ENCODE measurements at regions of chr12 and their contacts with region 1.

Region 1: GRCh38 chr12:25436203-25437030 is 116.7 kb downstream of the LMNTD1 start:
- ATAC-seq: peak; percentile 39 to 93 (median 60)
- H3K4me3 ChIP-seq: no peak overlapping the region
- H3K27ac ChIP-seq: no peak overlapping the region
- H3K4me1 ChIP-seq: no peaks in the 10 kb centered on the region

Region 2: DNA sequence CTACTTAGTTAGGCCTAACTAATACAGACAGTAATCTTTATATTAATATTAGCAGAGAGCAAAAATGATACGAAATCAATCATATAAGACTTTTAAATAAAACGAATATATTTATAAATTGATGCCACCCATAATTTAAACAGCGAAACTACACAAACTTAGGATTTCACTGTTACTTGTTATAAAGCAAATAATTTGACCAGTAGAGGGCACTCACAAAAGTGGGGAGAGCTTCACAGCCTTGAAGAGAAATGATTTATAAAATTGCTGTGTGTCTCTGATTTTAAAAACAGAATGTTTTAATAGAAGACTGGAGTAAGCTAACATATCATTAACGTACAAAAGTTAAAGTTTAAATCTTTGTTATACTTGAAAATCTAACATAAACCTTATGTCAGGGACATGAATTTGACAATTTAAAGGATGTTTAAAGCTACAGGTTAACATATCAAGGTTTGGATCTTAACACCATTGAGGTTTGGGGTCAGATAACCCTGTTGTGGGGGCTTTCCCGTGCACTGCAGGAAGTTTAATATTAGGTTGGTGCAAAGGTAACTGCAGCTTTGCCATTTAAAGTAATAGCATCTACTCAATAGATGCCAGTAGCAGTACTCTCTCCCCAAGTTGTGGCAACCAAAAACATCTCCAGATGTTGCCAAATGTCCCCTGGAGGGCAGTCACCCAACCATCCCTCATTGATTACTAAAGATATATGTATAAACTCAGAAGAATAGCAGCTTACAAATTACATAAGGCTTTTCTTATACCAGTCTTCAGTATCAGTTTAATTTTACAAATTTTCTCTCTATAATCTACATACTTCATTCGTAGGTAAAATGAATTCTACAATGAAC is 195.0 kb before region 1 on chr12:
- in situ Hi-C with region 1: no loop called
- ATAC-seq: peak in 4 of 8 experiments; percentile 25 to 59 (median 52)
- H3K4me3 ChIP-seq: no peak overlapping the region
- H3K27ac ChIP-seq: no peak overlapping the region
- H3K4me1 ChIP-seq: no peaks in the 10 kb centered on the region

Region 3: GRCh38 chr12:25557830-25558436 is 121.5 kb after region 1 on chr12:
- in situ Hi-C with region 1: loop called in 1 of 9 experiments (anchors 10 kb)
- ATAC-seq: no peak
- H3K4me3 ChIP-seq: no peak overlapping the region
- H3K27ac ChIP-seq: no peak overlapping the region
- H3K4me1 ChIP-seq: no peaks in the 10 kb centered on the region

Region 4: GRCh38 chr12:25614813-25615518 is 178.5 kb after region 1 on chr12:
- in situ Hi-C with region 1: no loop called
- ATAC-seq: peak; percentile 64 to 99 (median 98)
- H3K4me3 ChIP-seq: no peak overlapping the region
- H3K27ac ChIP-seq: peak overlapping the region; percentile 35 to 67
- H3K4me1 ChIP-seq: peaks cover 4 to 7% of the 10 kb centered on the region in 2 donors

Region 5: DNA sequence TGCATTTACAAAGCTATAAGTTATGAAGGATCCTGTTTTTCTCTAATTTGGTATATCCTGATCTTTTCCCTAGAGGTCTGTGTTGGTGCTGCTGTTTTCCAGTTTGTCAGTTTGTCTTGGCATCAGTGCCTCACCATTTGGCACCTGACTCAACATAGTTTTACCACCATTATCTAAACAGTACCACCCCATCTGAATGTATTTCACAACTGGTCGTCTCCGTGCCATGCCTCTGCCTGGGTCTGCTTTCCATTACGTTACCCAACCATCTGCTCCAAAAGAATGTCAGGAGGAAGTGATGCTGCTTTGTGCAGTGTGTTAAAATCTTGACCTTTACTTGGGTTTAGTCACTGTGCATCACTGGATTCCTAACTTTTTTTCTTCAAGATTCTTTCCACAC is 392.8 kb after region 1 on chr12:
- in situ Hi-C with region 1: no loop called
- ATAC-seq: peak in 1 of 8 experiments; percentile 22
- H3K4me3 ChIP-seq: no peak overlapping the region
- H3K27ac ChIP-seq: no peak overlapping the region
- H3K4me1 ChIP-seq: no peaks in the 10 kb centered on the region

Region 6: DNA sequence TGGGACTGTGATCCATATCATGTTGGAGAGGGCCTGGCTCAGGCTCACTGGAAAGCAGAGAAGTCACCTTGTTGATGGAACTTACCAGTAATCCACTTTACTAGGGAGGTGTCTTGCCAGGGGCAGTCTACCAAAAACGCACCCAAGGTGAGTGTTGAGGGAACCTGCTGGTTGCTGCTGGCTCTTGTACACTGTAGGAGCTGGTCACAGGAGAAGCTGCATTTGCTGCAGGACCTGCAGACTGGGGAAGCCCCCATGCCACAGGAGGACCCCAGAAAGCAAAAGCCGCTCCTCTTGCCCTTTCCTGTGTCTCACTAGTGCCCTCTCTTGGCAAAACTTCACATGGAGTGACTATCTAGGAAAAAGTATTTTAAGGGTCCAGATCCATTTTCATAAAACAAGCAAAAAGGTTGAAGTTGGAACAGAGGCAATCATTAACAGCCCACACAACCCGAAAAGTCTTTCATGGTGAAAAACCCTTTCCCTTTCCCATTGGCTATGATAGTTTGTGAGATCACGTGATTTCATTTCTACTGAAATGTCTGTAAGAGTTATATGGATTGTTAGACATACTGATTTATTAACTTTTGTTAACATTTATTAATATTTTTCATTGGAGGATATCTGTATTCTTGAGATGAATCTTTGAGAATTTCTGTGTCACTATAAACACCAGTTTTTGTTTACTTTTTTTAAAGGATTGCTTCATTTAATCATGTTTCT is 581.2 kb after region 1 on chr12:
- in situ Hi-C with region 1: loop called in 3 of 9 experiments (anchors 25 kb)
- ATAC-seq: peak in 1 of 8 experiments; percentile 56
- H3K4me3 ChIP-seq: no peak overlapping the region
- H3K27ac ChIP-seq: no peak overlapping the region
- H3K4me1 ChIP-seq: peaks cover 0 to 2% of the 10 kb centered on the region in 2 donors

Region 7: DNA sequence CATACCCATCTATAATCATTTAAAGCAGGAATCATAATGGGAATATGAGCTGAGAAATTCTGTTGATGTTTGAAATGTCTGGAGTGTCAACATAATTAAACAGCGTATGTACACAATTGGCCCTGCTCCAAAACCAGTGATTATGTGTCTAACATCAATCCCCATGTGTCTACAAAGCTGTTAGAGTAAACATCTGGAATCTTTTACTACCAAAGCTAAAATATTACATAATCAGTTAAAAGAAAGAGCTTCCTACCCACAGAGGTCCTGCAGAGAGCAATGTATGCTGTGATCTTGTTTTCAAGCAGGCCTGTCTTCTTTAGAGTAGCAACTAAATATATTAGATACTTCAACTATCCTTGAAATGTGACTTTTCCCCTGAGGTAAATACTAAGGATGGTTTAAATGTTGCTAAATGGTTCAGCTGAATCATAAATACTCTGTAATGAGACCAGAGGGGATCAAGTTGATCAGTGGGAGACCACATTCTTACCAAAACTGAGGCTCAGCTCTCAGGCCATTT is 596.4 kb after region 1 on chr12:
- in situ Hi-C with region 1: loop called in 1 of 9 experiments (anchors 10 kb)
- ATAC-seq: peak in 2 of 8 experiments; percentile 42 to 43
- H3K4me3 ChIP-seq: no peak overlapping the region
- H3K27ac ChIP-seq: no peak overlapping the region
- H3K4me1 ChIP-seq: peaks cover 0 to 3% of the 10 kb centered on the region in 2 donors